ENCODE measurements at regions of chr9 and their contacts with region 1.

Region 1: DNA sequence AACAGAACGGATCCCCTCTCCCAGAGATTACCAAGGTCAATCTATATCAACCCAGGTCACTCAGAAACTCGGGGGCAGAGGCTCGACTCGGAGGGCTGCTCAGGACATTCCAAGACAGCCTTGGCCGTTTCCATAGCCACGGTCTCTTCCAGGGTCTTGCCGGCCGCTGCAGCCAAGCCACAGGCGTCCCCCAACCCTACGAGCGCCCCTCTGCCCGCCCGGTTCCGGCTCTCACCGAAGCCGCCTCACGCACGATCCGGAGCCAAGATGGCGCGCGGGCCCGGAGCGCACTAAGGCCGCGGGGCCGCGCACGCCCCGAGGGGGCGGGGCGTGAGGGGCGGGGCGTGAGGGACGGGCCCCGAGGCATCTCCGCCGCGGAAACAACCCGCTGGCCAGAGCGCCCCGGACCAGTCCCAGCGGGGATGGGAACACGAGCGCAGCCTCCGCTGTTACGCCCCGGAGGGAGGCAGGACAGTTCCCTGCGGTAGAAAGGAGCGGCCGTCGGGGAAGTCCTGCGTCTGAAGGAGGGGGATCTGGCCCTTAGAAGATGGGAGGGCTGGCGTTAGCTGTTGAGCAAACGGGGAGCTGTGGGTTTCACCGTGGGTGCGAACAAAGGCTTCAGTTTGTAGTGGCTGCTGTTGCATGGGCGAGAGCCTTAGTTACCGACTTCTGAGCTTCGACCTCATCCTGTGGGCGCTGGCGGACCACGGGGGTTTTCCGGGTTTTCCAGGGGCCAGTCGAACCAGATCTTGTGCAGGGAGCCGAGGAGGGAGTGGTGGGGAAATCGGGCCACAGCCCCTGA is at the start of gene RPP25L:
- DNase-seq: peak; percentile 75 to 94 (median 86)
- ATAC-seq: peak; percentile 96
- H3K4me3 ChIP-seq: peak within 1 kb of the TSS; percentile 89
- H3K4me3 Mint-ChIP-seq: peak within 1 kb of the TSS; percentile 84 to 96 (median 90)
- H3K27ac ChIP-seq: peak within 1 kb of the TSS; percentile 87
- H3K27ac Mint-ChIP-seq: peak within 1 kb of the TSS; percentile 84 to 96 (median 93)
- H3K4me1 ChIP-seq: peaks cover 10 to 17% of the 10 kb centered on the region in 2 donors
- H3K4me1 Mint-ChIP-seq: peaks cover 6 to 28% (median 21%) of the 10 kb centered on the region in 7 donors
- H3K27me3 ChIP-seq: no peaks in the 10 kb centered on the region
- H3K27me3 Mint-ChIP-seq: no peaks in the 10 kb centered on the region
- total RNA-seq, gene RPP25L: 8.8 to 27.3 (median 25.1) TPM

Region 2: DNA sequence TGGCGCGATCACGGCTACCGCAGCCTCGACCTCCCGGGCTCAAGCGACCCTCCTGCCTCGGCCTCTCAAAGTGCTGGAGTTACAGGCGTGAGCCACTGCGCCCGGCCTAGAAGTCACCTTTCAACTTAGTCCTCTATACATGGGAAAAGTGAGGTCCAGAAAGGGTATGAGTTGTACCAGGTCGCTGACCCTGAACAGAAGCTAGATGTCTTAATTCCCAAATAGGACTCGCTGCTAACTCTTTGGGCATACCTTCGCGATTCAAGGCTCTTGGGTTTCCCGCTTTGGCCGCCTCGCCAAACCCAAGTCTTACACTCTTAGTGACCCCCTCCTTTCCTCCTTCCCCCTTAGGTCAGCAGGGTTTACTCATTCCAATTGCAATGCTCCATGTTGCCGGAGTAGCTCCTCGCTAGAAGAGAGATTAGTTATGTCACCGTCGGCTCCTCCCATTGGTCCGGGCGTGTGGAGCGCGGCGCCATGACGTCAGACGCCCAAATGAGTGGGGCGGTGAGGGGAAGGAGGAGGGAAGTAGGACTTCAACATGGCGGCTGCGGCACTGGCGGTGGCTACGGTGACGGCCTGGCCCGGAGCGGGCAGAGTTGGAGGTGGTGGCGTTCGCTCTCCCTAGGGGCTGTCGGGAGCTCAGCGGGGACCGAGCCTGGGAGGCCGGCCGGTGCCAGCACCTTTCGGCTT is 433.4 kb before region 1 on chr9 and contains the start of gene UBAP1:
- CTCF ChIA-PET with region 1: no interaction called
- POLR2A ChIA-PET with region 1: no interaction called
- intact Hi-C with region 1: loop called in 1 of 2 experiments (anchors 10 kb)
- DNase-seq: peak; percentile 83 to 97 (median 93)
- ATAC-seq: peak; percentile 99
- H3K4me3 ChIP-seq: peak within 1 kb of the TSS; percentile 93
- H3K4me3 Mint-ChIP-seq: peak within 1 kb of the TSS; percentile 93 to 100 (median 96)
- H3K27ac ChIP-seq: peak within 1 kb of the TSS; percentile 97
- H3K27ac Mint-ChIP-seq: peak within 1 kb of the TSS; percentile 94 to 99 (median 98)
- H3K4me1 ChIP-seq: peaks cover 0 to 8% of the 10 kb centered on the region in 2 donors
- H3K4me1 Mint-ChIP-seq: peaks cover 7 to 33% (median 21%) of the 10 kb centered on the region in 7 donors
- H3K27me3 ChIP-seq: no peaks in the 10 kb centered on the region
- H3K27me3 Mint-ChIP-seq: no peaks in the 10 kb centered on the region
- total RNA-seq, gene UBAP1: 31.1 to 39.9 (median 32.8) TPM

Region 3: GRCh38 chr9:34197756-34198711 is 414.0 kb before region 1 on chr9:
- CTCF ChIA-PET with region 1: no interaction called
- POLR2A ChIA-PET with region 1: no interaction called
- intact Hi-C with region 1: no loop called
- DNase-seq: no peak
- ATAC-seq: no peak
- H3K4me3 ChIP-seq: no peak overlapping the region
- H3K4me3 Mint-ChIP-seq: peak overlapping the region in 1 of 10 donors; percentile 19
- H3K27ac ChIP-seq: no peak overlapping the region
- H3K27ac Mint-ChIP-seq: peak overlapping the region in 3 of 9 donors; percentile 2 to 50 (median 29)
- H3K4me1 ChIP-seq: peaks cover 6 to 8% of the 10 kb centered on the region in 2 donors
- H3K4me1 Mint-ChIP-seq: peaks cover 30 to 68% (median 62%) of the 10 kb centered on the region in 7 donors
- H3K27me3 ChIP-seq: no peaks in the 10 kb centered on the region
- H3K27me3 Mint-ChIP-seq: no peaks in the 10 kb centered on the region

Region 4: GRCh38 chr9:34479431-34479866 is 132.6 kb before region 1 on chr9:
- CTCF ChIA-PET with region 1: no interaction called
- POLR2A ChIA-PET with region 1: no interaction called
- intact Hi-C with region 1: no loop called
- DNase-seq: no peak
- ATAC-seq: no peak
- H3K4me3 ChIP-seq: no peak overlapping the region
- H3K4me3 Mint-ChIP-seq: no peak overlapping the region
- H3K27ac ChIP-seq: no peak overlapping the region
- H3K27ac Mint-ChIP-seq: no peak overlapping the region
- H3K4me1 ChIP-seq: no peaks in the 10 kb centered on the region
- H3K4me1 Mint-ChIP-seq: peaks cover 0 to 3% (median 0%) of the 10 kb centered on the region in 7 donors
- H3K27me3 ChIP-seq: no peaks in the 10 kb centered on the region
- H3K27me3 Mint-ChIP-seq: peaks cover 4 to 26% (median 9%) of the 10 kb centered on the region in 5 donors

Region 5: DNA sequence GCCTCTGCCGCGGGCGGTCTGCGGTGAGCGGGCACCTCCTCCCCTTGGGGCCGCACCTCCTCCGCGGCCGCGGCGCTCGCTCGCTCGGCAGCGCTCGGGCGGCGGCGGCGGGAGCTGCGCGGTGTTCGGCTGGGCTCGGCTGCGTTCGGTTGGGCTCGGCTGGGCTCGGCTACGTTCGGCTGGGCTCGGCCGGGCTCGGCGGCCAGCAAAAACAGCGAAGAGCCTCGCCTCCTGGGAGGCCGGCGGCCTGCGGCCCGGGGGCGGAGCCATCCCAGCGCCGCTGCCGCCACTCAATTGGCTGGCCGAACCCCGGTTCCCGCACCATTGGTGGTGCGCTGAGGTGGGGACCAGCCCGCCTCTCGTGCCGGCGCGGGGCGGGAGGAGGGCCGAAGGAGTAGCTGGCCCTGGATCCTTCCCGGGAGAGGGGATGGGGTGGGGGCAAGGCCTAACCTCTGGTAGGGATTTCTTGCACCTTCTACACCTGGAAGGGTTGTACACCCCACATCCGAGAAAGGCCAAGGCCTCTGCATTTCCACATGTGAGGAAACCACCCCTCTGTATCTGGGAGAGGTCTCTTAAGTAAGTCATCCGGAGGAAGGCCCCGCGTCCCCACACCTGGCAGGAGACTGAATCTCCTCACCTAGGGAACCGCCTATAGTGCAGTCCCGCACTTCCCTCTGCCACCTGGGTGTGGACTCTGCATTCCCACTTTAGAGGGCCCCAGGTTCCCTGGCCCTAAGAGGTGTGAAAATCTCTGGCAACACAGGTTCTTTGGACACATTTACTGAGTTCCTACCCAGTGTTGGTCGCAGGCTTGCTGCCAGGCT is 88.8 kb before region 1 on chr9 and contains the start of gene ENHO:
- CTCF ChIA-PET with region 1: no interaction called
- POLR2A ChIA-PET with region 1: no interaction called
- intact Hi-C with region 1: loop called (anchors 2 to 5 kb)
- DNase-seq: peak; percentile 77 to 97 (median 91)
- ATAC-seq: peak; percentile 97
- H3K4me3 ChIP-seq: peak within 1 kb of the TSS; percentile 66
- H3K4me3 Mint-ChIP-seq: peak within 1 kb of the TSS; percentile 70 to 83 (median 78)
- H3K27ac ChIP-seq: peak within 1 kb of the TSS; percentile 61
- H3K27ac Mint-ChIP-seq: peak within 1 kb of the TSS in 7 of 9 donors; percentile 18 to 79 (median 61)
- H3K4me1 ChIP-seq: peaks cover 7 to 10% of the 10 kb centered on the region in 2 donors
- H3K4me1 Mint-ChIP-seq: peaks cover 5 to 19% (median 10%) of the 10 kb centered on the region in 7 donors
- H3K27me3 ChIP-seq: no peaks in the 10 kb centered on the region
- H3K27me3 Mint-ChIP-seq: peaks cover 0 to 55% (median 8%) of the 10 kb centered on the region in 5 donors
- total RNA-seq, gene ENHO: 0.56 to 1.9 TPM in 2 of 5 experiments, not detected in the others

Region 6: GRCh38 chr9:34591248-34591916 is 20.6 kb before region 1 on chr9:
- CTCF ChIA-PET with region 1: no interaction called
- POLR2A ChIA-PET with region 1: no interaction called
- intact Hi-C with region 1: loop called in 1 of 2 experiments (anchors 2 kb)
- DNase-seq: peak; percentile 48 to 85 (median 70)
- ATAC-seq: peak; percentile 85
- H3K4me3 ChIP-seq: peak overlapping the region; percentile 71
- H3K4me3 Mint-ChIP-seq: peak overlapping the region; percentile 28 to 91 (median 81)
- H3K27ac ChIP-seq: no peak overlapping the region
- H3K27ac Mint-ChIP-seq: no peak overlapping the region
- H3K4me1 ChIP-seq: peaks cover 0 to 13% of the 10 kb centered on the region in 2 donors
- H3K4me1 Mint-ChIP-seq: peaks cover 10 to 31% (median 28%) of the 10 kb centered on the region in 7 donors
- H3K27me3 ChIP-seq: peaks cover 4 to 17% of the 10 kb centered on the region in 2 donors
- H3K27me3 Mint-ChIP-seq: peaks cover 55 to 78% (median 66%) of the 10 kb centered on the region in 5 donors

Region 7: DNA sequence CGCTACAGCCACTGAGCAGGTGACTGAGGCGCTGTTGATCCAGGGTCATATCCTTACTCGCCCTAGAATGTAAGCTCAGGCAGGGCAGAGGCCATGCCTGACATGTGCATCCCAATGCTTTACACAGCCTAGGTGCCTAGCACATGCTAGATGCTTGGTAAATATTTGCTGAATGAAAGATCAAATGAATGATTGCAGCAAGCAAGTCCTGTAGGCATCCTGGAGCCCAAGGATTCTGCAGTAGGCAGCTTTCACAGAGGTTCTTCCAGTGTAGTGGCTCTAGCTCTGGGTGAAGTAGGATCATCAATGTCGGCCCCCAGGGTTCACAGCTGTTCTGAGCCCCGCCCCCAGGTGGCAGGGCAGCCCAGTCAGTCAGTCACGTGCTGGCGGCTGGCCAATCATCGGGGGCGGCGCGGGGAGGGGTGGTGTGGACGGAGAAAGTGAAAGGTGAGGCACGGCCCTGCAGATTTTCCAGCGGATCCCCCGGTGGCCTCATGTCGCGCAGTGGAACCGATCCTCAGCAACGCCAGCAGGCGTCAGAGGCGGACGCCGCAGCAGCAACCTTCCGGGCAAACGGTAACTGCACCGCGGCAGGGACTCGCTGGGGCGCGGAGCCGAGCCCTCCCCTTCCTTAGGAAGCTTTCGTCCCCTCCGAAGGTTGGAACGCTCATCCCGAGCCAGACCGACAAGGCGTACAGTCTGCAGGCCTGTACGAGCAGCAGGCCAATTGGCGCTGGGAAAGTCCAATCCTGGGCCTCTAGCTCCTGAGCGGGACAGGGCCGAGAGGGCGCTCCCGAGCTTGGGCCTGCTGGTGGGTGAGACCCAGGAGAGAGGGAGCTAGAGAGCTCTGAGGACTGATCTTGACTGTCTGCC is 34.4 kb after region 1 on chr9 and contains the start of gene GALT:
- CTCF ChIA-PET with region 1: interaction called, 8 read pairs
- POLR2A ChIA-PET with region 1: interaction called, 4 read pairs
- intact Hi-C with region 1: loop called (anchors 5 kb)
- DNase-seq: peak; percentile 82 to 98 (median 93)
- ATAC-seq: peak; percentile 96
- H3K4me3 ChIP-seq: peak within 1 kb of the TSS; percentile 90
- H3K4me3 Mint-ChIP-seq: peak within 1 kb of the TSS; percentile 82 to 96 (median 92)
- H3K27ac ChIP-seq: peak within 1 kb of the TSS; percentile 87
- H3K27ac Mint-ChIP-seq: peak within 1 kb of the TSS; percentile 86 to 94 (median 90)
- H3K4me1 ChIP-seq: peaks cover 20 to 23% of the 10 kb centered on the region in 2 donors
- H3K4me1 Mint-ChIP-seq: peaks cover 18 to 48% (median 34%) of the 10 kb centered on the region in 7 donors
- H3K27me3 ChIP-seq: no peaks in the 10 kb centered on the region
- H3K27me3 Mint-ChIP-seq: no peaks in the 10 kb centered on the region
- total RNA-seq, gene GALT: 126 to 217 (median 162) TPM

Region 8: GRCh38 chr9:34701769-34702736 is 90.0 kb after region 1 on chr9:
- CTCF ChIA-PET with region 1: interaction called, 6 read pairs
- POLR2A ChIA-PET with region 1: interaction called, 3 read pairs
- intact Hi-C with region 1: loop called (anchors 1 kb)
- DNase-seq: peak; percentile 59 to 83 (median 73)
- ATAC-seq: peak; percentile 90
- H3K4me3 ChIP-seq: peak overlapping the region; percentile 61
- H3K4me3 Mint-ChIP-seq: peak overlapping the region; percentile 80 to 91 (median 84)
- H3K27ac ChIP-seq: no peak overlapping the region
- H3K27ac Mint-ChIP-seq: peak overlapping the region in 7 of 9 donors; percentile 1 to 84 (median 20)
- H3K4me1 ChIP-seq: no peaks in the 10 kb centered on the region
- H3K4me1 Mint-ChIP-seq: peaks cover 5 to 9% (median 6%) of the 10 kb centered on the region in 7 donors
- H3K27me3 ChIP-seq: no peaks in the 10 kb centered on the region
- H3K27me3 Mint-ChIP-seq: peaks cover 0 to 17% (median 0%) of the 10 kb centered on the region in 5 donors

Measured in naive thymus-derived CD4-positive, alpha-beta T cell (primary cell).